Thyroid gland (tissue), 4 donors: ENCODE measurements at regions of chr1 and their contacts with region 1.

Region 1: DNA sequence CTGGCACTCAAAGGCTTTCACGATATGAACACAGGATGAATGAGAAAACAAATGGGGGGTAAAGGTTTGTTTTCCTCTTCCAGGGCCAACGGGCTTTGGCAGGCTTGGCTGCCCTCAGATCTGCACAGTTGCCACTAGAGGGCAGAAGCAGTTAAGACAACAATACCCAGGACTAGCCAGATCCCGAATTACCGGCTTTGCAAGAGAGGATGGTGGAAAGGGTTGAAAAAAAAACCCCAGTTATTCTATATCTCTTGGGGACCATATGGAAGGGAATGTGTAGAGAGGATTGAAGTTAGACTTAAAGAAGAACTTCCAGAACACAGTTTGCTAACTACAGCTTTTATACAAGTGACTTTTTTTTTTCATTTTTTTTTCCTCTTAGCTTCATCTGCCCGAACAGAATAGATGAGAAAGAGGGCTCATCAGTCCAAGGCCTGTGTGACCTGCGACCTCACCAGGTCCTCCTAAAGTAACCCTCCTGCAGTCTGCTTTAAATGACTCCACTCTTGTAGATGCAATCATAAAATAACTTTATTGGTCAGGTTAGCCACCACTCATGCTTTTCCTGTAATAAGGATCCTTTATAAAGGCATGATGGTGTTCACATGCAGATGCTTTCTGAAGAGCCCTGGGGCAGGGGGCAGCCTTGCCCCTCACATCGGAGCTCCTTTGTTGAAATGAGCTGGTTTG is 10.7 kb downstream of the FMOD start:
- DNase-seq: peak; percentile 73
- H3K4me3 ChIP-seq: no peak overlapping the region
- H3K27ac ChIP-seq: peak overlapping the region in 2 of 3 donors; percentile 36 to 52
- H3K4me1 ChIP-seq: peaks cover 31 to 39% of the 10 kb centered on the region in 2 donors
- H3K27me3 ChIP-seq: no peaks in the 10 kb centered on the region
- CTCF ChIP-seq: peak; percentile 66 to 94 (median 84)
- POLR2A ChIP-seq: no peak

Region 2: GRCh38 chr1:203117611-203118575 is 222.4 kb before region 1 on chr1:
- intact Hi-C with region 1: no loop called
- DNase-seq: peak; percentile 80 to 81
- H3K4me3 ChIP-seq: no peak overlapping the region
- H3K27ac ChIP-seq: no peak overlapping the region
- H3K4me1 ChIP-seq: no peaks in the 10 kb centered on the region
- H3K27me3 ChIP-seq: no peaks in the 10 kb centered on the region
- CTCF ChIP-seq: peak; percentile 60 to 92 (median 81)
- POLR2A ChIP-seq: no peak

Region 3: GRCh38 chr1:203440771-203441170 is 100.5 kb after region 1 on chr1:
- intact Hi-C with region 1: loop called (anchors 5 kb)
- DNase-seq: peak; percentile 93 to 94
- H3K4me3 ChIP-seq: no peak overlapping the region
- H3K27ac ChIP-seq: peak overlapping the region; percentile 10 to 67 (median 61)
- H3K4me1 ChIP-seq: peaks cover 0 to 15% of the 10 kb centered on the region in 2 donors
- H3K27me3 ChIP-seq: no peaks in the 10 kb centered on the region
- CTCF ChIP-seq: peak in 5 of 6 experiments; percentile 34 to 86 (median 69)
- POLR2A ChIP-seq: no peak

Region 4: DNA sequence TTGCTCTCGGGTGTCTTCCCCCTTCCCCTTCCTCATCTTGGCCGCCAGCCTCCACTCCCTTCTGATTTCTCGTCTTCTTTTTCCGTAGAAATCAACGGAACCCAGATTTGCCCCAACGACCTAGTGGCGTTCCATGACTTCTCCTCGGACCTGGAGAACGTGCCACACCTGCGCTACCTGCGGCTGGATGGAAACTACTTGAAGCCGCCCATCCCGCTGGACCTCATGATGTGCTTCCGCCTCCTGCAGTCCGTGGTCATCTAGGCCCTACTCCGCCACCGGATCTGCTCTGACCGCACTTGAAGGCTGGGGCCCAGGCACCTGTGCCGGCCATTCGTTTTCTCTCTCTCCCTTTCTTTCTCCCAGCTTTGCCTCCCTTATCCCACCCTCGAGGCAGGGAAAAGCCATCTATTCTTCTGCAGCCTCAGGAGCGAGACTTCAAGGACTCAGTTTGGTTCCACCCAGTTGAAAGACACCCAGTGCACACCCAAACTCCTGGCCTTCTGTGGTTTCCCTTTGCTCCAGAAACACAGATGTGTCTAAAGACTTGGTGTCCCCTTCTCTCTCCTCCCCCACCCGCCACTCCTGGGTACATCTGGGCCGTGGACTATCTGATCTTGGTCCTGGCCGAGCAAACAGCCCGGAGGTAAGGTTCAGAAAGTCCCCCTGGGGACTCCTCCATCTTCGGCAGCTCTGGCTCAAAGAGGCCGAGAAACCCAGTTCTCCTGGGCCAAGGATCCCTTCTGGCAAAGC is 146.5 kb after region 1 on chr1:
- intact Hi-C with region 1: loop called (anchors 2 kb)
- DNase-seq: no peak
- H3K4me3 ChIP-seq: peak overlapping the region in 1 of 3 donors; percentile 25
- H3K27ac ChIP-seq: peak overlapping the region in 2 of 3 donors; percentile 74 to 80
- H3K4me1 ChIP-seq: peaks cover 4 to 7% of the 10 kb centered on the region in 2 donors
- H3K27me3 ChIP-seq: no peaks in the 10 kb centered on the region
- CTCF ChIP-seq: no peak
- POLR2A ChIP-seq: no peak

Region 5: GRCh38 chr1:203692565-203693470 is 352.6 kb after region 1 on chr1:
- intact Hi-C with region 1: loop called (anchors 10 kb)
- DNase-seq: peak; percentile 94 to 95
- H3K4me3 ChIP-seq: no peak overlapping the region
- H3K27ac ChIP-seq: peak overlapping the region; percentile 83 to 89 (median 86)
- H3K4me1 ChIP-seq: peaks cover 16 to 39% of the 10 kb centered on the region in 2 donors
- H3K27me3 ChIP-seq: no peaks in the 10 kb centered on the region
- CTCF ChIP-seq: peak in 3 of 6 experiments; percentile 12 to 39 (median 28)
- POLR2A ChIP-seq: peak in 1 of 2 donors; percentile 28